CD4-positive, alpha-beta T cell (primary cell): ENCODE measurements at regions of chr10 and their contacts with region 1.

Region 1: GRCh38 chr10:123380497-123381085 is 226.4 kb downstream of the BUB3 start:
- DNase-seq: peak in 3 of 14 experiments; percentile 14 to 24 (median 22)
- ATAC-seq: no peak
- H3K4me3 ChIP-seq: no peak overlapping the region
- H3K4me3 Mint-ChIP-seq: no peak overlapping the region
- H3K27ac ChIP-seq: no peak overlapping the region
- H3K27ac Mint-ChIP-seq: no peak overlapping the region
- H3K4me1 ChIP-seq: no peaks in the 10 kb centered on the region
- H3K4me1 Mint-ChIP-seq: no peaks in the 10 kb centered on the region
- H3K27me3 ChIP-seq: no peaks in the 10 kb centered on the region
- H3K27me3 Mint-ChIP-seq: peaks cover 20% of the 10 kb centered on the region
- CTCF ChIP-seq: peak; percentile 23

Region 2: GRCh38 chr10:122981066-122981464 is 399.5 kb before region 1 on chr10:
- CTCF ChIA-PET with region 1: no interaction called
- POLR2A ChIA-PET with region 1: no interaction called
- intact Hi-C with region 1: no loop called
- DNase-seq: peak in 2 of 14 experiments; percentile 26 to 37
- ATAC-seq: no peak
- H3K4me3 ChIP-seq: peak overlapping the region; percentile 85
- H3K4me3 Mint-ChIP-seq: peak overlapping the region; percentile 94
- H3K27ac ChIP-seq: no peak overlapping the region
- H3K27ac Mint-ChIP-seq: peak overlapping the region; percentile 96
- H3K4me1 ChIP-seq: peaks cover 16% of the 10 kb centered on the region
- H3K4me1 Mint-ChIP-seq: peaks cover 18% of the 10 kb centered on the region
- H3K27me3 ChIP-seq: no peaks in the 10 kb centered on the region
- H3K27me3 Mint-ChIP-seq: no peaks in the 10 kb centered on the region
- CTCF ChIP-seq: no peak

Region 3: GRCh38 chr10:123043409-123043925 is 337.1 kb before region 1 on chr10:
- CTCF ChIA-PET with region 1: interaction called, 3 read pairs
- POLR2A ChIA-PET with region 1: no interaction called
- intact Hi-C with region 1: loop called (anchors 1 to 2 kb)
- DNase-seq: peak; percentile 12 to 72 (median 30)
- ATAC-seq: peak; percentile 69
- H3K4me3 ChIP-seq: no peak overlapping the region
- H3K4me3 Mint-ChIP-seq: no peak overlapping the region
- H3K27ac ChIP-seq: no peak overlapping the region
- H3K27ac Mint-ChIP-seq: no peak overlapping the region
- H3K4me1 ChIP-seq: peaks cover 2% of the 10 kb centered on the region
- H3K4me1 Mint-ChIP-seq: peaks cover 8% of the 10 kb centered on the region
- H3K27me3 ChIP-seq: no peaks in the 10 kb centered on the region
- H3K27me3 Mint-ChIP-seq: no peaks in the 10 kb centered on the region
- CTCF ChIP-seq: peak; percentile 69

Region 4: GRCh38 chr10:123139521-123140163 is 240.9 kb before region 1 on chr10:
- CTCF ChIA-PET with region 1: interaction called, 7 read pairs
- POLR2A ChIA-PET with region 1: no interaction called
- intact Hi-C with region 1: loop called in 1 of 2 experiments (anchors 2 kb)
- DNase-seq: no peak
- ATAC-seq: no peak
- H3K4me3 ChIP-seq: no peak overlapping the region
- H3K4me3 Mint-ChIP-seq: peak overlapping the region; percentile 21
- H3K27ac ChIP-seq: no peak overlapping the region
- H3K27ac Mint-ChIP-seq: no peak overlapping the region
- H3K4me1 ChIP-seq: peaks cover 70% of the 10 kb centered on the region
- H3K4me1 Mint-ChIP-seq: peaks cover 65% of the 10 kb centered on the region
- H3K27me3 ChIP-seq: peaks cover 89 to 97% of the 10 kb centered on the region in 2 experiments
- H3K27me3 Mint-ChIP-seq: peaks cover 90% of the 10 kb centered on the region
- CTCF ChIP-seq: no peak